Naive thymus-derived CD4-positive, alpha-beta T cell (primary cell): ENCODE measurements at regions of chr3 and their contacts with region 1.

Region 1: DNA sequence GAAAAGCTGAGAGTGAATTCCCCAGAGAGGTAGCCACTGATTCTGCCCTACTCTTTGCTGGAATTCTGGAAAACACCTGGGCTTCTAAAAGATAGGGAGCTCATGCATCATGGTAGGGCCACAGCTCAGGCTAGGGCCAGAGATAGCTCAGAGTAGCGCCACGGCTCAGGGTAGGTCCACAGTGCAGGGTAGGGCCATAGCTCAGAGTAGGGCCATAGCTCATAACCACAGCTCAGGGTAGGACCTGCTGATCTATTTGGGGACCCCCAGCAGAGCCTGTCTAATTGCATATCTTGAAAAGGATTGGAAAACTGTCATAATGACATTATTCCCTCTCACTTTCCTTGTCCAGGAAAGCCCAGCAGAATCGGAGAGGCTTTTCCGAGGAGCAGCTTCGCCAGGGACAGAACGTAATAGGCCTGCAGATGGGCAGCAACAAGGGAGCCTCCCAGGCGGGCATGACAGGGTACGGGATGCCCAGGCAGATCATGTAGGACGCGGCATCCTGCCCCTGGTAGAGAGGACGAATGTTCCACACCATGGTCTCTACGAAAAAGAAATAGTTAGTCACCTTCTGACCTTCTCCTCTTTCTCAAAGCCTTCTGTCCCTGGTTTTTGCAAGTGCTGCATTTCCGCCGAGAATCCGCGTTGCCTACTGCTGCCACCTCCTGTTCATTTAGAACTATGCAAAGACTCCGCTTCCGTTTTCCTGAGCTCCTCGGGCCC is 14.5 kb downstream of the TAGLN3 start:
- DNase-seq: peak in 8 of 9 donors; percentile 30 to 63 (median 55)
- ATAC-seq: peak; percentile 88
- H3K4me3 ChIP-seq: no peak overlapping the region
- H3K4me3 Mint-ChIP-seq: peak overlapping the region in 4 of 10 donors; percentile 24 to 70 (median 26)
- H3K27ac ChIP-seq: no peak overlapping the region
- H3K27ac Mint-ChIP-seq: peak overlapping the region in 2 of 9 donors; percentile 42 to 83
- H3K4me1 ChIP-seq: no peaks in the 10 kb centered on the region
- H3K4me1 Mint-ChIP-seq: peaks cover 0 to 20% (median 10%) of the 10 kb centered on the region in 7 donors
- H3K27me3 ChIP-seq: no peaks in the 10 kb centered on the region
- H3K27me3 Mint-ChIP-seq: no peaks in the 10 kb centered on the region

Region 2: GRCh38 chr3:111895079-111895478 is 118.1 kb before region 1 on chr3:
- CTCF ChIA-PET with region 1: no interaction called
- POLR2A ChIA-PET with region 1: no interaction called
- intact Hi-C with region 1: loop called in 1 of 2 experiments (anchors 2 kb)
- DNase-seq: peak in 1 of 9 donors; percentile 2
- ATAC-seq: no peak
- H3K4me3 ChIP-seq: no peak overlapping the region
- H3K4me3 Mint-ChIP-seq: no peak overlapping the region
- H3K27ac ChIP-seq: no peak overlapping the region
- H3K27ac Mint-ChIP-seq: no peak overlapping the region
- H3K4me1 ChIP-seq: no peaks in the 10 kb centered on the region
- H3K4me1 Mint-ChIP-seq: peaks cover 0 to 4% (median 0%) of the 10 kb centered on the region in 7 donors
- H3K27me3 ChIP-seq: no peaks in the 10 kb centered on the region
- H3K27me3 Mint-ChIP-seq: peaks cover 0 to 3% (median 0%) of the 10 kb centered on the region in 5 donors

Region 3: GRCh38 chr3:111967651-111968274 is 45.5 kb before region 1 on chr3:
- CTCF ChIA-PET with region 1: interaction called, 7 read pairs
- POLR2A ChIA-PET with region 1: no interaction called
- intact Hi-C with region 1: loop called (anchors 1 kb)
- DNase-seq: peak; percentile 44 to 72 (median 64)
- ATAC-seq: peak; percentile 96
- H3K4me3 ChIP-seq: no peak overlapping the region
- H3K4me3 Mint-ChIP-seq: peak overlapping the region in 2 of 10 donors; percentile 12 to 44
- H3K27ac ChIP-seq: no peak overlapping the region
- H3K27ac Mint-ChIP-seq: peak overlapping the region in 1 of 9 donors; percentile 71
- H3K4me1 ChIP-seq: peaks cover 0 to 4% of the 10 kb centered on the region in 2 donors
- H3K4me1 Mint-ChIP-seq: peaks cover 3 to 13% (median 5%) of the 10 kb centered on the region in 7 donors
- H3K27me3 ChIP-seq: no peaks in the 10 kb centered on the region
- H3K27me3 Mint-ChIP-seq: no peaks in the 10 kb centered on the region

Region 4: DNA sequence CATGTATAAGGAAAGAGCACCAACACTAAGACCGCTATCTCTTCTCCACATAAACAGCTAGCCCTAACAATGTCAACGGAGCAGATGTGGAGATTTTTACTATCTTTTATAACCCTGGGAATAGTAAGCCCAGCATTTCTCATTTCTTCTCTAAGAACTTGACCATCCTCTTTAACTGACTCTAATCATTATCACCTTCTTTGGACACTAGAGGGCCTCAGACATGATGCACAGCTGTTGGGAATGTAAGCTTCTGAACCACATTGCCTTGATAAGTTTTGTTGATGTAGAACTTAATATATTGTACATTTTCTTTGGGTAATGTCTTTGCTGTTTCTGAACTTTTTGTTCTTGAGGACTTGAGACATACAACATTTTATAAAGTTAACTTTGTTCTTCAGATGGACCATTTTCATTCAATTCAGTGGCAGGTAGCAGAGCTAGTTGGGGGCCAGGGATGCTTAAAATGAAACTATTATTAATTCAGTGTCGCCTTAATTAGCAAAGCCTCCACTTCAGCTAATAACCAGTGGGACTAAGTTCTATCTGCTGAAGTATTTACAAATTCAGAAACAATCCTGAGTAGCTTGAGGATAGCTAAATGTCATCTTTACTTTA is 24.1 kb before region 1 on chr3:
- CTCF ChIA-PET with region 1: interaction called, 59 read pairs
- POLR2A ChIA-PET with region 1: interaction called, 3 read pairs
- intact Hi-C with region 1: loop called (anchors 1 kb)
- DNase-seq: peak in 3 of 9 donors; percentile 21 to 32 (median 32)
- ATAC-seq: peak; percentile 87
- H3K4me3 ChIP-seq: no peak overlapping the region
- H3K4me3 Mint-ChIP-seq: no peak overlapping the region
- H3K27ac ChIP-seq: no peak overlapping the region
- H3K27ac Mint-ChIP-seq: peak overlapping the region in 1 of 9 donors; percentile 30
- H3K4me1 ChIP-seq: no peaks in the 10 kb centered on the region
- H3K4me1 Mint-ChIP-seq: peaks cover 11 to 44% (median 35%) of the 10 kb centered on the region in 7 donors
- H3K27me3 ChIP-seq: no peaks in the 10 kb centered on the region
- H3K27me3 Mint-ChIP-seq: no peaks in the 10 kb centered on the region

Region 5: DNA sequence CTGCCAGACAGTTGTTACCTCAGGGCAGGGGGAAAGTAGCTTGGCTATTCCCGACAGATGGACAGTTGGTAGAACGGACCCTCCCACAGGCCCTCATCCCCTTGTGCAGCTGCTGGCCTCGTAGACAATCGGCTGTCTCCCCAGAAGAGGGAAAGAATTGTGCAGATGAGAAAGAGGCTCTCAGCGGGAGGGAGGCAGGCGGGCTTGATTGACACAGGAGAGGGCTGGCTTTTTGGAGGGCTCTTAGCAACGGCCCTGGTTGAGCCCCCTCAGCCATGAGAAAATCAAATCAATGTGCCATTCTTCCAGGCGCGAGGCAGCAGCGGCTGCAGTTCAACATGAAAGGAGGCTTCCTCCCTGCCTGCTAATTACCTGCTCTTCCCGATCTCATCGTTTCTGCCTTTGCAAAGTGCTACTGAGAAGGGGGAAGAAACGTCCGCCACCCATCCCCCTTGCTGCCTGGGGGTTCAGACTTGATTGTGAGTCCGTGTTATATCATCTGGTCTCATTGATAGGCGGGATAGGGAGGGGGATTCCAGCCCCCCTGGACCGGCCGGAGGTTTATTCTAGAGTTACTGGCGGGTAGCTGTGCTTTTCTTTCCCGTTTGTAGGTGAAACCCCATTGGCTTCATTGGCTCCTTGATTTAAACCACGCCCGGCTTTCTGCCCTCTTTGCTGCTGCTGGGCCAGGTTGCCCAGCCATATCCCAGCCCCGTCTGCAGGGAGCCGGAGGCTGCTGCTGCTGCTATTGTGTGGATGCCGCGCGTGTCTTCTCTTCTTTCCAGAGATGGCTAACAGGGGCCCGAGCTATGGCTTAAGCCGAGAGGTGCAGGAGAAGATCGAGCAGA is 14.4 kb before region 1 on chr3 and contains the start of gene TAGLN3:
- CTCF ChIA-PET with region 1: interaction called, 11 read pairs
- POLR2A ChIA-PET with region 1: interaction called, 4 read pairs
- intact Hi-C with region 1: no loop called
- DNase-seq: peak in 1 of 9 donors; percentile 22
- ATAC-seq: peak; percentile 69
- H3K4me3 ChIP-seq: peak within 1 kb of the TSS; percentile 49
- H3K4me3 Mint-ChIP-seq: peak within 1 kb of the TSS; percentile 75 to 91 (median 85)
- H3K27ac ChIP-seq: no peak within 1 kb of the TSS
- H3K27ac Mint-ChIP-seq: peak within 1 kb of the TSS in 2 of 9 donors; percentile 43 to 67
- H3K4me1 ChIP-seq: peaks cover 5 to 22% of the 10 kb centered on the region in 2 donors
- H3K4me1 Mint-ChIP-seq: peaks cover 16 to 47% (median 35%) of the 10 kb centered on the region in 7 donors
- H3K27me3 ChIP-seq: no peaks in the 10 kb centered on the region
- H3K27me3 Mint-ChIP-seq: no peaks in the 10 kb centered on the region
- total RNA-seq, gene TAGLN3: 0.51 TPM in 1 of 5 experiments, not detected in the others